H1 (cell line): ENCODE measurements at regions of chr2 and their contacts with region 1.

Region 1: GRCh38 chr2:64250751-64251403 is 106.7 kb upstream of the PELI1 start:
- DNase-seq: no peak
- H3K4me3 ChIP-seq: peak overlapping the region; percentile 4 to 63 (median 41); a peak in 4 of 8 replicates
- H3K27ac ChIP-seq: peak overlapping the region; percentile 53
- H3K4me1 ChIP-seq: peaks cover 3 to 29% (median 23%) of the 10 kb centered on the region in 4 experiments; a peak in 6 of 7 replicates
- H3K27me3 ChIP-seq: no peaks in the 10 kb centered on the region
- CTCF ChIP-seq: no peak
- EP300 ChIP-seq: no peak
- POLR2A ChIP-seq: no peak
- RAD21 ChIP-seq: no peak

Region 2: GRCh38 chr2:64222351-64222750 is 28.5 kb before region 1 on chr2:
- CTCF ChIA-PET with region 1: interaction called, 3 read pairs
- POLR2A ChIA-PET with region 1: interaction called, 10 read pairs
- DNase-seq: no peak
- H3K4me3 ChIP-seq: no peak overlapping the region
- H3K27ac ChIP-seq: no peak overlapping the region
- H3K4me1 ChIP-seq: peaks cover 4 to 15% (median 12%) of the 10 kb centered on the region in 4 experiments; a peak in 6 of 7 replicates
- H3K27me3 ChIP-seq: no peaks in the 10 kb centered on the region
- CTCF ChIP-seq: no peak
- EP300 ChIP-seq: no peak
- POLR2A ChIP-seq: no peak
- RAD21 ChIP-seq: no peak

Region 3: DNA sequence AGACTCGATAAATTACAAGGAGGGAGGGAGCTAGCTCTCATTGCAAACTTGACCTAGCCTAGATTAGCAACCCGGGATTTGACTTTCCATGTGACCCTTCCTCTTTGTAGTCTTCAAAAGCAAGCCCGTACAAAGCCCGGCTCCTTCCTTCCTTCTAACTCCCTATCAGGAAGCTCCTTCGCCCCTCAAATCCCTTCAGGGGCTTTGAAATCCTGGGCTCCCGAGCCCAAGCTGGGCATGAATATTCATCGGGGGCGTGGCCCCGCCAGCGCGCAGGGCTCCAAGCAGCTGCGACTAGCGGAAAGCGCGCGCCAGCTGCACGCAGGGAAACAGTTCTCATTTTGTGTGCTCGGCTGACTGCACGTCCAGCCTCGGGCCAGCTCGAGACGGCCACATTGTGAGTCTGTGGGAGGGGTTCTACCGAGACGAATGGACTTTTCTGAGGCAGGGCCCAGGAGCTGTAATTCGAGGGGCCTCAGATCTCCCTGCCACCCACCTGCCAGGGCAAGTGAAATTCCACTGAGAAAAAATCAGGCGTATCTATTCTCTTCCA is 22.7 kb before region 1 on chr2:
- CTCF ChIA-PET with region 1: interaction called, 6 read pairs
- POLR2A ChIA-PET with region 1: interaction called, 23 read pairs
- DNase-seq: peak; percentile 86 to 88
- H3K4me3 ChIP-seq: peak overlapping the region; percentile 31 to 56 (median 36); a peak in 7 of 8 replicates
- H3K27ac ChIP-seq: no peak overlapping the region
- H3K4me1 ChIP-seq: peaks cover 0 to 12% (median 6%) of the 10 kb centered on the region in 4 experiments; a peak in 4 of 7 replicates
- H3K27me3 ChIP-seq: no peaks in the 10 kb centered on the region
- CTCF ChIP-seq: no peak
- EP300 ChIP-seq: no peak
- POLR2A ChIP-seq: 0 out of 3 replicates have a peak, but pooled peaks of 1 of the 2 experiments have one; percentile 37
- RAD21 ChIP-seq: no peak; a peak in 1 of 4 replicates

Region 4: GRCh38 chr2:64234785-64235184 is 16.1 kb before region 1 on chr2:
- CTCF ChIA-PET with region 1: interaction called, 6 read pairs
- POLR2A ChIA-PET with region 1: interaction called, 23 read pairs
- DNase-seq: no peak
- H3K4me3 ChIP-seq: no peak overlapping the region
- H3K27ac ChIP-seq: no peak overlapping the region
- H3K4me1 ChIP-seq: no peaks in the 10 kb centered on the region
- H3K27me3 ChIP-seq: no peaks in the 10 kb centered on the region
- CTCF ChIP-seq: no peak
- EP300 ChIP-seq: no peak
- POLR2A ChIP-seq: no peak
- RAD21 ChIP-seq: no peak

Region 5: DNA sequence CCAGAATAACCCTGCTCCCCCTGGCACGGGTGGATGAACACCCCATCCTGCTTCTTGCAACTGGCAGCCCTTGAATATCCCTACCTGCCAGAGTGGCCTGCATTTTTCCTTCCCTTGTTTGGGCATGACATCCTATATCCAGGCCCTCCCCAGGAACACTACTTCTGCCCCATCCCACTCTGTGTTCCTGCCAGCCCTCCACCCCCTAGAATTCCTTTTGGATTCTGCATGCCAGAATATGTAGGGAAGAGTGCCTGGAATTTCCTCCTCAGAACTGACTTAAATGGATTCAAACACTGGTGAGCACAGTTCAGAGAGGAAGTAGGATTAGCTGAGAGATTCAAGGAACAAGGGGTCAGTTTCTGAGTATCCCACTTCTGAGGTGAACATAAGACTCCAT is 16.8 kb after region 1 on chr2:
- CTCF ChIA-PET with region 1: interaction called, 3 read pairs
- POLR2A ChIA-PET with region 1: interaction called, 27 read pairs
- DNase-seq: peak in 1 of 2 experiments; percentile 66
- H3K4me3 ChIP-seq: no peak overlapping the region; a peak in 1 of 8 replicates
- H3K27ac ChIP-seq: peak overlapping the region; percentile 6; the same call in 1 of the 2 replicates
- H3K4me1 ChIP-seq: peaks cover 0 to 38% (median 25%) of the 10 kb centered on the region in 4 experiments
- H3K27me3 ChIP-seq: no peaks in the 10 kb centered on the region
- CTCF ChIP-seq: no peak
- EP300 ChIP-seq: peak in 1 of 2 experiments; percentile 79; a peak in 2 of 3 replicates
- POLR2A ChIP-seq: peak in 1 of 2 experiments; percentile 64; a peak in 1 of 3 replicates
- RAD21 ChIP-seq: peak in 1 of 2 experiments; percentile 11; a peak in 1 of 4 replicates

Region 6: GRCh38 chr2:64273524-64274398 is 22.9 kb after region 1 on chr2:
- CTCF ChIA-PET with region 1: interaction called, 4 read pairs
- POLR2A ChIA-PET with region 1: interaction called, 26 read pairs
- DNase-seq: no peak
- H3K4me3 ChIP-seq: no peak overlapping the region; a peak in 1 of 8 replicates
- H3K27ac ChIP-seq: no peak overlapping the region; the same call in 1 of the 2 replicates
- H3K4me1 ChIP-seq: peaks cover 19 to 38% (median 35%) of the 10 kb centered on the region in 4 experiments
- H3K27me3 ChIP-seq: no peaks in the 10 kb centered on the region
- CTCF ChIP-seq: no peak
- EP300 ChIP-seq: no peak
- POLR2A ChIP-seq: no peak; a peak in 1 of 3 replicates
- RAD21 ChIP-seq: no peak

Region 7: DNA sequence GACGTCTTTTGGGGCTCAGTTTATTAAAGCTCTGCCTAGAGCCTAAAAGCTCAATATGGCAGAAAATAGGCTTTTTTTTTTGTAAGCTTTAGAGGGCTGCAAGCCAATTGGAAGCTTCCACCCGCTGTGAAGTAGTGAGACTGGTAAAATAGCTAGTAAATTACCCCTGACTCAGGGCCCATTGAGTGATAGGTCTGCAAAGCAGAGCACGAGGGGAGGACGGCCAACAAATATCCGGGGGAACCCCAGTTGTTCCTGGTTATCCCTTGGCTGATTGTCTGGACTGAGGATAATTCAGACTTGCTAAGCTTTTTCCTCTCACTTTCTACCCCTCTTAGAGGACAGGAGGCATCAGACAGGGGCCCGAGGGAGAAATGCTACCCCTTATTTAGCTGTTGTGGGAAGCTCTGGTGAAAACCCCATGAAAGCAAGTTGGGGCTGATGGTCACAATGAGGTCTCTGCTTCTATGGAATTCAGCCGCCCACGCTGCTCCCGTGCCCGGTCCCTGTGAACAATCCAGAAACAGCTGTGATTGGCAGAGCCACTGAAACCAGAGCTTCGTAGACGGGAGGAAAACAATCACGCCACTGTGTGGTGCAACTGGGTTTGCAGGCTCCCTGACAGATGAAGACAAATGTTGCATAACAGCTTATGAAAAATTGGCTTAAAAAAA is 61.2 kb after region 1 on chr2:
- CTCF ChIA-PET with region 1: interaction called, 3 read pairs
- POLR2A ChIA-PET with region 1: interaction called, 10 read pairs
- DNase-seq: peak in 1 of 2 experiments; percentile 49
- H3K4me3 ChIP-seq: no peak overlapping the region
- H3K27ac ChIP-seq: no peak overlapping the region
- H3K4me1 ChIP-seq: peaks cover 3 to 10% (median 8%) of the 10 kb centered on the region in 4 experiments; a peak in 5 of 7 replicates
- H3K27me3 ChIP-seq: no peaks in the 10 kb centered on the region; a peak in 1 of 7 replicates
- CTCF ChIP-seq: peak in 2 of 3 experiments; percentile 5 to 32; a peak in 2 of 4 replicates
- EP300 ChIP-seq: no peak
- POLR2A ChIP-seq: no peak
- RAD21 ChIP-seq: peak; percentile 28 to 43; a peak in 2 of 4 replicates